ENCODE measurements at regions of chr15 and their contacts with region 1.

Region 1: GRCh38 chr15:27358751-27359434 is 387.9 kb downstream of the GABRG3 start:
- DNase-seq: no peak
- H3K4me3 ChIP-seq: no peak overlapping the region
- H3K27ac ChIP-seq: no peak overlapping the region
- H3K4me1 ChIP-seq: no peaks in the 10 kb centered on the region
- H3K27me3 ChIP-seq: no peaks in the 10 kb centered on the region
- CTCF ChIP-seq: peak in 3 of 5 experiments; percentile 41 to 46 (median 42)
- EP300 ChIP-seq: no peak
- POLR2A ChIP-seq: no peak

Region 2: DNA sequence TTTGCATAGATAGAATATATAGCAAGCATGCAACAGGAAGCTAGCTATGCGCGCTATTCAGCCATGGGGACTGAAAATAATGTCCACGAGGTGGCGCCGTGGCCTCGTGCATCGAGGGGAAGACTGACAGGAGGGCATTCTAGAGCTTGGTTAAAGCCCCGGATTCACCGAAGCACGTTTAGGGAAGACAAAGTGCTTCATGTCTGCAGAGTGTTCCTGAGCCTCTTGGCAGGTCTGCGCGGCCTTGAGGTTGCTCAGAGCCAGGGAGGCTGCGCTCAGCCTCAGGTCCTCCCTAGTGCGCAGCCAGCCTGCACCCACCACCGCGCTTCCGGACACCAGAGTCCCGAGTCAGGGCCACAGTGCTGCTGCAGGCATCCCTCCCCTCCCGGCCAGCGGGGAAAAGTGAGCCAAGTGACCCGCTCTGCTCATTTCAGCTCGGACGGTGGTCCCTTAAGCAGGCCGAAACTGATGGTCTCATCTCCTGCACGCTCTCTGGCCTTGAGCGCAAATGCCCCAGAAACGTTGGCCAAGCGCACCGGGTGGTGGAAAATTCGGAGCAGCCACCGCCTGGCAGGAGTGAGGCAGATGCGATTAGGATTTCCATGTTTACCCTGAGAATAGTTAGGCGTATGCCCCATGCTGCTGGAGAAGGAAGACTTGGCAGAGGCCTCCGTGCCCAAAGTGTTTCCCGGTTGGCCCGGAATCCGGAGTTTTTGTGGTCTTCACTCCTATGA is 467.3 kb before region 1 on chr15:
- in situ Hi-C with region 1: loop called in 2 of 4 experiments (anchors 25 kb)
- intact Hi-C with region 1: no loop called
- DNase-seq: no peak
- H3K4me3 ChIP-seq: peak overlapping the region in 1 of 4 donors; percentile 31
- H3K27ac ChIP-seq: no peak overlapping the region
- H3K4me1 ChIP-seq: peaks cover 0 to 5% (median 0%) of the 10 kb centered on the region in 4 donors
- H3K27me3 ChIP-seq: peaks cover 9% of the 10 kb centered on the region
- CTCF ChIP-seq: peak; percentile 15 to 48 (median 34)
- EP300 ChIP-seq: no peak
- POLR2A ChIP-seq: no peak

Region 3: GRCh38 chr15:27250223-27250622 is 108.7 kb before region 1 on chr15:
- in situ Hi-C with region 1: loop called in 1 of 4 experiments (anchors 25 kb)
- intact Hi-C with region 1: no loop called
- DNase-seq: no peak
- H3K4me3 ChIP-seq: no peak overlapping the region
- H3K27ac ChIP-seq: no peak overlapping the region
- H3K4me1 ChIP-seq: no peaks in the 10 kb centered on the region
- H3K27me3 ChIP-seq: no peaks in the 10 kb centered on the region
- CTCF ChIP-seq: no peak
- EP300 ChIP-seq: no peak
- POLR2A ChIP-seq: no peak

Region 4: DNA sequence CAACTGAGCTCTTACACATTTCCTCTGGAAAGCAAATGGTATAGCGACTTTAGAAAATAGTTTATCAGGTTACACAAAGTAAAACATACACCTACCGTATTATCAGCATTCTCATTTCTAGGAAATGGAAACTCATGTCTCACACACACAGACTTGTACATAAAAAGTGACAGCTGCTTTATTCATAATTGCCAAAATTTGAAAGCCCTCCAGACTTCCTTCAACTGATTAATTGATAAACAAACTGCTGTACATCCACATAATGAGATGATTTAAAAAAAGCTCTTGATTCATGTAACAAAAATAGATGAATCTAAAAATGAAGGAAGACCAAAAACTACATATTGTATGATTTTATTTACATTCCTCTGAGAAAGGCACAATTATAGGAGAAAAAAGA is 37.6 kb after region 1 on chr15:
- in situ Hi-C with region 1: no loop called
- intact Hi-C with region 1: no loop called
- DNase-seq: no peak
- H3K4me3 ChIP-seq: no peak overlapping the region
- H3K27ac ChIP-seq: no peak overlapping the region
- H3K4me1 ChIP-seq: no peaks in the 10 kb centered on the region
- H3K27me3 ChIP-seq: no peaks in the 10 kb centered on the region
- CTCF ChIP-seq: no peak
- EP300 ChIP-seq: no peak
- POLR2A ChIP-seq: no peak